ENCODE measurements at regions of chr10 and their contacts with region 1.

Region 1: GRCh38 chr10:26357203-26357602 is 80.9 kb upstream of the APBB1IP start:
- DNase-seq: peak; percentile 16
- ATAC-seq: peak; percentile 97
- H3K4me3 Mint-ChIP-seq: no peak overlapping the region
- H3K27ac Mint-ChIP-seq: peak overlapping the region; percentile 9
- H3K4me1 Mint-ChIP-seq: peaks cover 13% of the 10 kb centered on the region
- H3K27me3 Mint-ChIP-seq: no peaks in the 10 kb centered on the region

Region 2: DNA sequence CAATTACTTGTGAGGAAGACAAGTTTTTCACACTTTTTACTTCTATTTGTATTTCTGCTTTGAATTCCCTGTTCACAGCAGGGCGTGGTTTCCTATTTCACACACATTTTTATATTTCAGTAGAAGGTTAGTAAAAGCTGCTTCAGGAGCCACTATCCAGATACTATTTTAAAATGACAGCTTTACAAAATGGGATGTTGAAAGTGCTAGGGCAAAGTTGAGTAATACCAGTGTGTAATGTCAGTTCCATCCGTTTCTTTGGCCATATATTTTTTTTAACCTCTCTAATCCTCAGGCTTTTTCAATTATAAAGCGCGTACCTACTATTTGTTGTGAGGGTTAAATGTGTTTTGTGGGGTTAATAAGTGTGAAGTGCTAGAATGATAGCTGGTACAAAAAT is 905.8 kb before region 1 on chr10:
- CTCF ChIA-PET with region 1: no interaction called
- POLR2A ChIA-PET with region 1: no interaction called
- intact Hi-C with region 1: no loop called
- DNase-seq: no peak
- ATAC-seq: no peak
- H3K4me3 Mint-ChIP-seq: no peak overlapping the region
- H3K27ac Mint-ChIP-seq: no peak overlapping the region
- H3K4me1 Mint-ChIP-seq: no peaks in the 10 kb centered on the region
- H3K27me3 Mint-ChIP-seq: no peaks in the 10 kb centered on the region

Region 3: GRCh38 chr10:26430641-26431164 is 73.5 kb after region 1 on chr10:
- CTCF ChIA-PET with region 1: no interaction called
- POLR2A ChIA-PET with region 1: interaction called, 3 read pairs
- intact Hi-C with region 1: loop called (anchors 2 kb)
- DNase-seq: peak; percentile 46
- ATAC-seq: peak; percentile 97
- H3K4me3 Mint-ChIP-seq: peak overlapping the region; percentile 43
- H3K27ac Mint-ChIP-seq: peak overlapping the region; percentile 92
- H3K4me1 Mint-ChIP-seq: peaks cover 29% of the 10 kb centered on the region
- H3K27me3 Mint-ChIP-seq: no peaks in the 10 kb centered on the region

Region 4: DNA sequence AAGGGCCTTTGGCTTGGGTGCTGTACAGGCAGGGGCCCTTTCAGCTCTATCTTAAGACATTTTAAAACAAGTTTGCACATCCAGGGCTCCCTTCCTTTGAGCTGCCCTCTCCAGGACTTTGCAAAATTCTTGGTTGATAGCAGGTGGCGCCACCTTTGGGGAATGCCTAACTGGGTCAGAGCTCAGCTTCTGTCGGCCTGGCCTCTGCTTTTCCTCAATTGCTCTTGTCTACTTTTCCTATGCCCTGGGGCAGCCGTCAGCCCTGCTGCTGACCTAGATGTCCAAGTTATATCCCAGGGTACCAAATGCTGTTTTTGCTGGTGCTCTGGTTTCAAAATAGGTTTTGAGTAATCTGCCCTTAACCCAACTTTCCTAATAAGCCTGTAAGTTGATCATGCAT is 146.7 kb after region 1 on chr10:
- CTCF ChIA-PET with region 1: no interaction called
- POLR2A ChIA-PET with region 1: no interaction called
- intact Hi-C with region 1: loop called in 1 of 2 experiments (anchors 5 kb)
- DNase-seq: peak; percentile 54
- ATAC-seq: no peak
- H3K4me3 Mint-ChIP-seq: no peak overlapping the region
- H3K27ac Mint-ChIP-seq: peak overlapping the region; percentile 43
- H3K4me1 Mint-ChIP-seq: peaks cover 15% of the 10 kb centered on the region
- H3K27me3 Mint-ChIP-seq: no peaks in the 10 kb centered on the region

Measured in activated CD4-positive, alpha-beta T cell treated with anti-CD3 and anti-CD28 coated beads for 36 hours (primary cell).